ENCODE measurements at regions of chr19 and their contacts with region 1.

Region 1: DNA sequence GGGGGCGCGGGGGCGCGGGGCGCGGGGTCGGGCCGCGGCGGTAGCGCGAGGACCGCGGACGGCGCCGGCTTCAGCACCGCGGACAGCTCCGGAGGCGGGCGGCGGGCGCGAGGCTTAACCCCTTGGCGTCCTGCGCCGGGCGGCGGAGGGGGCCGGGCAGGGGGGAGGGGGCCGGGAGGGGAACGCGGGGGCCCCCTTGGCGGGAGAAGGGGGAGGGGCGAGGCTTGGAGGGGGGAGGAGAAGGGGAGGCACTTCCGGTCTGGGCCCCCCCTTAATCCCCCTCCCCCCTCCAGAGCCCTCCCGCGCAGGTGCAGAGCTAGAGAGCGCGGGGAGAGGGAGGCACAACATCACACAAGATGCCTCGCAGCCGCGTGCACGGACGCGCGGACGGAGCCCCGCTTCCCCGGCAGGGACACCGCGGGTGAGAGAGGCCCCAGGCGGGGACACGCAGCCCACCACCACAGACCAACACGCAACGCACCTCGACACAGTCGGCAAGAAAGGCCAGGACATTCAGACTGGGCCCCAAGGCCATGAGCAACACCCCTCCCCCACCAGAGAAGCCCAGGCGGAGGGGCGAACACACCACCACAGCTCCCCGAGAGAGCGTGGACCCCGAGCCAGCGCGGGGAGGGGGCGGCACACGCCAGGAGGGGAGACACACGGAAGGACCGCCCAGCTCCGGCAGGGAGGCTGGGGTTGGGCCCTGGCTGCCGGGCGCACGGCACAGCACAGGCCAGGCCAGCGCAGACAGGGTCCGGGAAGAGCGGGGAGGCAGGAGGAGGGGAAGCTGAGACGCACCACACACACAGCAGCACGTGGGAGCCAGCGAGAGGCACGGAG is 24.1 kb downstream of the SHANK1 start:
- DNase-seq: peak in 3 of 9 experiments; percentile 33 to 52 (median 43)
- ATAC-seq: peak; percentile 54
- H3K4me3 ChIP-seq: no peak overlapping the region
- H3K4me3 Mint-ChIP-seq: no peak overlapping the region
- H3K27ac ChIP-seq: no peak overlapping the region
- H3K27ac Mint-ChIP-seq: no peak overlapping the region
- H3K4me1 ChIP-seq: no peaks in the 10 kb centered on the region
- H3K4me1 Mint-ChIP-seq: no peaks in the 10 kb centered on the region
- H3K27me3 ChIP-seq: peaks cover 16 to 27% of the 10 kb centered on the region in 2 experiments
- H3K27me3 Mint-ChIP-seq: peaks cover 59% of the 10 kb centered on the region
- CTCF ChIP-seq: no peak

Region 2: GRCh38 chr19:50333035-50333736 is 362.3 kb before region 1 on chr19:
- CTCF ChIA-PET with region 1: no interaction called
- POLR2A ChIA-PET with region 1: no interaction called
- intact Hi-C with region 1: loop called in 1 of 2 experiments (anchors 10 kb)
- DNase-seq: peak; percentile 71 to 93 (median 88)
- ATAC-seq: peak; percentile 74
- H3K4me3 ChIP-seq: peak overlapping the region; percentile 58 to 77
- H3K4me3 Mint-ChIP-seq: peak overlapping the region; percentile 85
- H3K27ac ChIP-seq: no peak overlapping the region
- H3K27ac Mint-ChIP-seq: peak overlapping the region; percentile 24
- H3K4me1 ChIP-seq: peaks cover 48% of the 10 kb centered on the region
- H3K4me1 Mint-ChIP-seq: peaks cover 47% of the 10 kb centered on the region
- H3K27me3 ChIP-seq: peaks cover 27 to 39% of the 10 kb centered on the region in 2 experiments
- H3K27me3 Mint-ChIP-seq: peaks cover 57% of the 10 kb centered on the region
- CTCF ChIP-seq: no peak